Endothelial cell of umbilical vein (primary cell): ENCODE measurements at regions of chr5 and their contacts with region 1.

Region 1: DNA sequence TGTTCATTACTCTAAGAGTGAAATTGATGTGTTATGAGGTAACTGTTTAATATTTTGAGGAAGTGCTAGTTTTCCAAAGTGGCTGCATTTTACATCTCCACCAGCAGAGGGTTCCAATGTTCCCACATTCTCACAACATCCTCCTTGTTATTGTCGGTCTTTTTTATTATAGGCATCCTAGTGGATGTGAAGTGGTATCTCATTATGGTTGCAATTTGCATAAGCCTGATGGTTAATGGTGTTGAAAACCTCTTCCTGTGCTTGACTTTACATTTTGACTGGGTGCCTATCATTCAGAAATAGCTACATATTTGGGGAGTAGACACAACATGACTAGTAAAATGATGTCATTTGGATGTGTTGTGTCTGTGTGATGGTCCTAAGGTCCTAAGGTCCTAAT is 143.6 kb downstream of the MRPS30 start:
- DNase-seq: peak; percentile 54
- H3K4me3 ChIP-seq: no peak overlapping the region
- H3K27ac ChIP-seq: no peak overlapping the region
- H3K4me1 ChIP-seq: no peaks in the 10 kb centered on the region
- H3K27me3 ChIP-seq: no peaks in the 10 kb centered on the region
- CTCF ChIP-seq: peak; percentile 43 to 63
- POLR2A ChIP-seq: no peak

Region 2: DNA sequence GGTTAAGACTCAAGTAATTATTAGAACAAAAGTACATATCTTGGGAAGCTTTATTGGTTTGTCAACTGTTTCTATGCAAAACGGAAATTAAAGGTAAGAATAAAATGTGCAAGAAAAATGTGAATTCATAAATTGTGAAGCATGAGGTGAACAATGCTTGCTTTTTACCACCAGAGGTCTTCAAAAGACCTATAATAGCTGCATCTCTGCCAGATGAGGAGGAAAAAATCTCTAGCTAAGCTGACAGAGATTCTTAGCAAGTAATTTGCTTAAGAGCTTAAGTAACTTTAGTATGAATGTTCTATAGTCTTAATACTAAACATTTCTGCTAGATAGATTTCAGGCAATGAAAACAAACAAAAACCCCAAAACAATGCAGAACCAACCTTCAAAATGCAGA is 89.6 kb before region 1 on chr5:
- CTCF ChIA-PET with region 1: no interaction called
- POLR2A ChIA-PET with region 1: no interaction called
- dilution Hi-C with region 1: no loop called
- intact Hi-C with region 1: loop called (anchors 5 kb)
- DNase-seq: peak; percentile 28
- H3K4me3 ChIP-seq: no peak overlapping the region
- H3K27ac ChIP-seq: no peak overlapping the region
- H3K4me1 ChIP-seq: no peaks in the 10 kb centered on the region
- H3K27me3 ChIP-seq: no peaks in the 10 kb centered on the region
- CTCF ChIP-seq: peak in 1 of 2 donors; percentile 33
- POLR2A ChIP-seq: no peak

Region 3: GRCh38 chr5:45696206-45696836 is 743.9 kb after region 1 on chr5 and contains the start of gene HCN1:
- CTCF ChIA-PET with region 1: interaction called, 5 read pairs
- POLR2A ChIA-PET with region 1: no interaction called
- dilution Hi-C with region 1: no loop called
- intact Hi-C with region 1: loop called (anchors 1 kb)
- DNase-seq: peak; percentile 73
- H3K4me3 ChIP-seq: no peak within 1 kb of the TSS
- H3K27ac ChIP-seq: no peak within 1 kb of the TSS
- H3K4me1 ChIP-seq: no peaks in the 10 kb centered on the region
- H3K27me3 ChIP-seq: peaks cover 8 to 12% of the 10 kb centered on the region in 2 experiments
- CTCF ChIP-seq: peak; percentile 69 to 90
- POLR2A ChIP-seq: no peak
- total RNA-seq, gene HCN1: not detected in 2 replicates